ENCODE measurements at regions of chr5 and their contacts with region 1.

Region 1: GRCh38 chr5:148374692-148375360 is 8.9 kb upstream of the FBXO38 start:
- DNase-seq: no peak

Region 2: GRCh38 chr5:148186248-148186996 is 188.4 kb before region 1 on chr5:
- intact Hi-C with region 1: loop called (anchors 10 kb)
- DNase-seq: no peak

Region 3: DNA sequence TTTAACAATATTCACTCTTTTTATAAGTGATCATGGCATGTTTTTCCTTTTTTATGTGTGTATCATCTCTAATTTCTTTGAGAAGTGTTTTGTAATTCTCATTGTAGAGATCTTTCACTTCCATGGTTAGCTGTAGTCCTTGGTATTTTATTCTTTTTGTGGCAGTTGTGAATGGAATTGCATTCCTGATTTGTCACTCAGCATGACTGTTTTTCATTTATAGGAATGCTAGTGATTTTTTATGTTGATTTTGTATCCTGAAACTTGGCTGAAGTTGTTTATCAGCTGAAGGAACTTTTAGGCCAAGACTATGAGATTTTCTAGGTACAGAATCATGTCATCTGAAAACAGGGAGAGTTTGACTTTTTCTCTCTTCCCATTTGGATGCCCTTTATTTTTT is 119.4 kb before region 1 on chr5:
- intact Hi-C with region 1: no loop called
- DNase-seq: no peak

Region 4: GRCh38 chr5:148290271-148291195 is 84.3 kb before region 1 on chr5:
- intact Hi-C with region 1: loop called (anchors 5 kb)
- DNase-seq: no peak

Region 5: DNA sequence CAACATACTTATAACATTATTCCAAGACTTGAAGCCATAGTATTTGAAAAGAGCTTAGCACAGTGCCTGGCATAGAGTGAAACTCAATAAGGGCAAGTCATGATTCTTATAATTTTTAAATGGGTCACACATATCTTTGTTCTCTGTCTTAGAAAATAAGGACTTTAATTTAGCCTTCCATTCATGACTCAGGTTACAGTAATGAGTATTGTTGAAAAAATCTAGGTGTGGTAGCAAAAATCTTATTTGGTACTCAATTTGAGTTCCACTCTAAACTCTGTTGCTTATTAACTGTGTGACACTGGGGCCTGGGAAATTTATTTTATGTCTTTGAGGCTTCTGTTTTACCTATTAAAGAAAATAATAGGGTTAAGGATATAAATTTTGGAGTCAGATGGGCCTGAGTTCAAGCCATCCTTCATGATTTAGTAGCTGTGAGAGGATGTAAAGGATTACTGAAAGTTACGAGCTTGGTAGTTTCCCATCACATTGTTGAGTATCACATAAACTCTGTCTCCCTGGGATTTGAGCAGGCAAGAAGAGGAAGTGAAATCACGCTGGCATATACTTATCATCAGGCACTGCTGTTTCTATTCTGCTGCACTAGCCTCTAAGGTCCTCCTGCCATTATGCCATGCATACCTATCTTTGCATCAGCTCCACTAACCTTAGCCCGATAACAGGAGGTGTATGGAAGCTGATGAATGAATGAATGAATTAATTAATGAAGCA is 38.0 kb before region 1 on chr5:
- intact Hi-C with region 1: no loop called
- DNase-seq: no peak

Region 6: GRCh38 chr5:148416921-148417320 is 42.1 kb after region 1 on chr5:
- intact Hi-C with region 1: loop called (anchors 5 kb)
- DNase-seq: no peak

Region 7: DNA sequence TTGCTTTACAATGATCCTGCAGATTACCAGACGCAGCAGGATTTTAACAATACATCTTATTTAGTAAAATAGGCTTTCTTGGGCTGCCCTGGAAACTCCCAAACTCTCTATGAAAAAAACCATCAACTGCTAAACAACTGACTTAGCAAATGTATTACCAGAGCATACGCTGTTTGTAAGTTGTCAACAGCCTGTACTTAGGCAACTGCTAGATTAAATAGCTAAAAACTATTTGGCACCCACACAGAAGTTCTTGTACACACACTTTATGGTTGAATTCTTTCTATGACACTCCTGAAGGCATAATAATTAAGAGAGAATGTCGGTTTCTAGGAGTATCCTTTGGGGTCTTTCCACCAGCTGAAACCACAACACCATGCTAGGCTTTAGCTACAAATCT is 132.8 kb after region 1 on chr5:
- intact Hi-C with region 1: no loop called
- DNase-seq: no peak

Region 8: GRCh38 chr5:148699028-148699427 is 324.2 kb after region 1 on chr5:
- intact Hi-C with region 1: no loop called
- DNase-seq: no peak

Measured in cardiac septum (tissue), 1 donor.